Caco-2 (cell line): ENCODE measurements at regions of chr20 and their contacts with region 1.

Region 1: GRCh38 chr20:31943052-31943471 is 8.8 kb downstream of the PDRG1 start:
- DNase-seq: no peak
- H3K4me3 ChIP-seq: no peak overlapping the region
- H3K4me3 Mint-ChIP-seq: no peak overlapping the region
- H3K27ac Mint-ChIP-seq: no peak overlapping the region
- H3K4me1 ChIP-seq: no peaks in the 10 kb centered on the region
- H3K4me1 Mint-ChIP-seq: no peaks in the 10 kb centered on the region
- H3K27me3 ChIP-seq: no peaks in the 10 kb centered on the region
- H3K27me3 Mint-ChIP-seq: no peaks in the 10 kb centered on the region
- CTCF ChIP-seq: no peak

Region 2: DNA sequence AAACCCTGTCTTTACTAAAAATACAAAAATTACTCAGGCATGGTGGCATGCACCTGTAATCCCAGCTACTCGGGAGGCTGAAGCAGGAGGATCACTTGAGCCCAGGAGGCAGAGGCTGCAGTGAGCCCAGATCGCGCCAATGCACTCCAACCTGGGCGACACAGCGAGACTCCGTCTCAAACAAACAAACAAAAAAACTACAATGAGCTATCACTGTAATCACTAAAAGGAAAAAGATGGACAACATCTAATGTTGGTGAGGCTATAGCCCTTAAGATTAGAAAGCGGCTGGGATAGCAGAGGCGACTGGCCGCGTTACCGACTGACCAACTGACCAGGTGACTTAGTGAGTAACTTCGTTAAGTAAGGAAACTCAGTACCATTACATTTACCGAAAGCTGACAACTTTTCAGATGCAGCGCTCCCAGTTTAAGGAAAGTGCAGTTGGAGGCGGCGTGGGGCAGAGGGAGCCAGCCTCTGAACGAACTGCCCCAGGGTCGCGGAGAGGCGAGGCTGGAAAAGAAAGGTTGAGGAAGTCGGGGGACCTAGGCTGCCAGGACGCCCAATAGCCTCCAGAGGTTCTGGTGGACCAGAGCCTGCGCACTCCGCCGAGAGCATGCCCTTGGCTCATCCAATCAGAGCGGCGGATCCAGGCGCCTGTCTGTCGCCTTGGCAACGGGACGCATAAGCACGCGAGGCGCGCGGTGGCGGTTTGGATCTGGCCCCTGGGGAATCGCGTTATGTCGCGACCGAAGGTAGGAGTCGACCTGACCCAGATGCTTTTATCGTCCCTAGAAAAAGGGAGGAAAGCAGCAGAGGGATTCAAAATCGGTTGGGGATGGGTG is 63.7 kb before region 1 on chr20:
- CTCF ChIA-PET with region 1: no interaction called
- POLR2A ChIA-PET with region 1: no interaction called
- intact Hi-C with region 1: no loop called
- DNase-seq: peak; percentile 99 to 100
- H3K4me3 ChIP-seq: peak overlapping the region; percentile 82
- H3K4me3 Mint-ChIP-seq: peak overlapping the region; percentile 88
- H3K27ac Mint-ChIP-seq: peak overlapping the region; percentile 95
- H3K4me1 ChIP-seq: no peaks in the 10 kb centered on the region
- H3K4me1 Mint-ChIP-seq: peaks cover 12% of the 10 kb centered on the region
- H3K27me3 ChIP-seq: no peaks in the 10 kb centered on the region
- H3K27me3 Mint-ChIP-seq: peaks cover 2% of the 10 kb centered on the region
- CTCF ChIP-seq: no peak

Region 3: GRCh38 chr20:31923388-31924331 is 19.4 kb before region 1 on chr20:
- CTCF ChIA-PET with region 1: no interaction called
- POLR2A ChIA-PET with region 1: interaction called, 13 read pairs
- intact Hi-C with region 1: no loop called
- DNase-seq: no peak
- H3K4me3 ChIP-seq: no peak overlapping the region
- H3K4me3 Mint-ChIP-seq: no peak overlapping the region
- H3K27ac Mint-ChIP-seq: no peak overlapping the region
- H3K4me1 ChIP-seq: peaks cover 1% of the 10 kb centered on the region; the same call in 1 of the 2 replicates
- H3K4me1 Mint-ChIP-seq: peaks cover 2% of the 10 kb centered on the region
- H3K27me3 ChIP-seq: peaks cover 3% of the 10 kb centered on the region
- H3K27me3 Mint-ChIP-seq: peaks cover 28% of the 10 kb centered on the region
- CTCF ChIP-seq: no peak